WTC11 (cell line): ENCODE measurements at regions of chr1 and their contacts with region 1.

Region 1: GRCh38 chr1:119647734-119648619 is at the start of gene ZNF697:
- DNase-seq: peak; percentile 90
- ATAC-seq: peak; percentile 88
- H3K4me3 Mint-ChIP-seq: peak within 1 kb of the TSS; percentile 91
- H3K27ac Mint-ChIP-seq: peak within 1 kb of the TSS; percentile 64
- H3K4me1 Mint-ChIP-seq: peaks cover 43% of the 10 kb centered on the region
- H3K27me3 Mint-ChIP-seq: peaks cover 15% of the 10 kb centered on the region
- CTCF ChIP-seq: peak; percentile 46
- total RNA-seq, gene ZNF697: 13.9 to 18.0 TPM (median 14.2 TPM) in 3 replicates

Region 2: DNA sequence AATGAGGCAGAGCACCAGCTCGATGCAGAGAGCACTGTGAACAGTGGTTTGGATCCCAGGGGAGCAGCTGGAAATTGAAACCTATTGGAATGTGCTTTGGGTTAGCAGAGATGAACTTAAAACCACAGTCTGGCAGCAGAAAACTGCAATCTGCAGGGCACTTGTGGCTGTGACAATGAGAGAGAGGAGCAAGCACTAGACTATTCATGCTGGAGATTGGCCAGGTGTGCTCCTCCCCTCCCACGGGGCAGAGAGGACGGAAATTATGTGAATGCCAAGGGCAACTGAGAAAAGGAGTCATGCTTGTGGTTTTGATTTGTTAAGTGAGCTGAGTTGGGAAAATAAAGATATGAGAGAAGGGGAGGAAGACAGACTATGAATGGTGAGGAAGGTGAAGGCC is 195.0 kb before region 1 on chr1:
- CTCF ChIA-PET with region 1: no interaction called
- POLR2A ChIA-PET with region 1: no interaction called
- DNase-seq: no peak
- ATAC-seq: no peak
- H3K4me3 Mint-ChIP-seq: no peak overlapping the region
- H3K27ac Mint-ChIP-seq: no peak overlapping the region; the same call in 1 of the 2 replicates
- H3K4me1 Mint-ChIP-seq: peaks cover 15% of the 10 kb centered on the region
- H3K27me3 Mint-ChIP-seq: no peaks in the 10 kb centered on the region
- CTCF ChIP-seq: no peak

Region 3: GRCh38 chr1:119613769-119614720 is 33.9 kb before region 1 on chr1:
- CTCF ChIA-PET with region 1: interaction called, 35 read pairs
- POLR2A ChIA-PET with region 1: interaction called, 10 read pairs
- DNase-seq: peak; percentile 92
- ATAC-seq: peak; percentile 85
- H3K4me3 Mint-ChIP-seq: no peak overlapping the region
- H3K27ac Mint-ChIP-seq: no peak overlapping the region
- H3K4me1 Mint-ChIP-seq: peaks cover 23% of the 10 kb centered on the region
- H3K27me3 Mint-ChIP-seq: peaks cover 4% of the 10 kb centered on the region
- CTCF ChIP-seq: peak; percentile 73

Region 4: DNA sequence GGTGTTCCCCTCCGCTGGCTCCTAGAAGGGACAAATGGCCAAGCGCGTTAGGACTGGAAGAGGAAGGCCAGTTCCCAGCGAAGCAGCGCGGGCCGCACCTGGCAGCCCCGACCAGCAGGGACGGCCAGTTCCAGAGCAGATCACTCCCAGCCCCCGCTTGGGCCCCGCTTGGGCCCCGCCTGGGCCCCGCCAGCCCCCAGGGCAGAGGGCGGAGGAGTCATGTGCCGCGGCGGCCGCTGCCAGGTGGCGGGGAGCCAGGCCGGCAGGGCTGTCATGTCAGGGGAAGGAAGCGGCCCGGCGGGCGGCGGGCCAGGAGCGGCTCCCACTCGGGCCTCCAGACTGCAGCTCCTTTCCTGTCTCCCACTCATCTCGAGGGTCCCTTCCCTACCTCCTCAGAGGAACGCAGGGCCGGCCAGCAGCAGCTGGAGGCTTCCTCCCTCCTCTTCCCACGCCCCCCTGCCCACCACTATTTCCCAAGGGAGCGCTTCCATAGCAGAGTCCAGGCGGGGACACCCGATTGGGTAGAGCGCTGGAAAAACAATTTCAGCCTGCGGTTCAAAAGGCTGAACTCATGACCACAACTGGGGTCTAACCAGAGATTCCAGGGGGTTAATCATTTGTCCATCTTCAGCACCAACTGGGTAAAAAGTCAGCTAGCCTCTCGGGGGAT is 16.4 kb before region 1 on chr1:
- CTCF ChIA-PET with region 1: interaction called, 26 read pairs
- POLR2A ChIA-PET with region 1: interaction called, 5 read pairs
- DNase-seq: peak; percentile 61
- ATAC-seq: peak; percentile 87
- H3K4me3 Mint-ChIP-seq: peak overlapping the region; percentile 26
- H3K27ac Mint-ChIP-seq: no peak overlapping the region
- H3K4me1 Mint-ChIP-seq: peaks cover 34% of the 10 kb centered on the region
- H3K27me3 Mint-ChIP-seq: no peaks in the 10 kb centered on the region
- CTCF ChIP-seq: no peak

Region 5: GRCh38 chr1:119662034-119662437 is 14.1 kb after region 1 on chr1:
- CTCF ChIA-PET with region 1: interaction called, 90 read pairs
- POLR2A ChIA-PET with region 1: interaction called, 44 read pairs
- DNase-seq: no peak
- ATAC-seq: no peak
- H3K4me3 Mint-ChIP-seq: no peak overlapping the region
- H3K27ac Mint-ChIP-seq: no peak overlapping the region; the same call in 1 of the 2 replicates
- H3K4me1 Mint-ChIP-seq: peaks cover 29% of the 10 kb centered on the region
- H3K27me3 Mint-ChIP-seq: no peaks in the 10 kb centered on the region
- CTCF ChIP-seq: no peak

Region 6: GRCh38 chr1:119711804-119712341 is 63.9 kb after region 1 on chr1 and contains the start of gene PHGDH:
- CTCF ChIA-PET with region 1: interaction called, 17 read pairs
- POLR2A ChIA-PET with region 1: interaction called, 15 read pairs
- DNase-seq: peak; percentile 78
- ATAC-seq: peak; percentile 73
- H3K4me3 Mint-ChIP-seq: peak within 1 kb of the TSS; percentile 98
- H3K27ac Mint-ChIP-seq: peak within 1 kb of the TSS; percentile 99
- H3K4me1 Mint-ChIP-seq: peaks cover 44% of the 10 kb centered on the region
- H3K27me3 Mint-ChIP-seq: no peaks in the 10 kb centered on the region; the same call in 1 of the 2 replicates
- CTCF ChIP-seq: no peak
- total RNA-seq, gene PHGDH: 592 to 630 TPM (median 618 TPM) in 3 replicates